Breast epithelium (tissue), 4 donors: ENCODE measurements at regions of chr16 and their contacts with region 1.

Region 1: GRCh38 chr16:76210157-76210556 is 67.0 kb upstream of the CNTNAP4 start:
- DNase-seq: no peak
- H3K4me3 ChIP-seq: no peak overlapping the region
- H3K27ac ChIP-seq: no peak overlapping the region
- H3K4me1 ChIP-seq: no peaks in the 10 kb centered on the region
- H3K27me3 ChIP-seq: no peaks in the 10 kb centered on the region
- CTCF ChIP-seq: no peak
- POLR2A ChIP-seq: no peak

Region 2: DNA sequence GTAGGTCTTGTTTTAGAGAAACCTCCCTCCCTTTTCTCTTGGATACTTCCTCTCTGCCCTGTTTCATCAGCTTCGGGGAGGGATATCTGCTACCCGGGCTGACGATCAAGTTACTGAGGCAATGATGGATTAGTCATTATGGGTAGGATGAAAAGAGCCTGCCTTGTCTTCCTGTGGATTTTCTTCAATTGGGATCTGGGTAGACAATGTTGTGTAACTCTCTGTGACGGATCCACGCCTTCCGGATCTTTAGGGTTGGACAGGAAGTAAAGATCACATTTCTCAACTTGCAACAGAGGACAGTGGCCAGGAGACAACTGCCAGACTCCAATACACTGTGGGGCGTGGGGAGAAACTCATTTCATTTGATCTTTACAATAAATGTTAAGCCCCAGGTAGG is 703.6 kb before region 1 on chr16:
- intact Hi-C with region 1: loop called (anchors 10 kb)
- DNase-seq: peak in 1 of 2 donors; percentile 29
- H3K4me3 ChIP-seq: no peak overlapping the region
- H3K27ac ChIP-seq: peak overlapping the region in 1 of 2 donors; percentile 21
- H3K4me1 ChIP-seq: no peaks in the 10 kb centered on the region
- H3K27me3 ChIP-seq: no peaks in the 10 kb centered on the region
- CTCF ChIP-seq: no peak
- POLR2A ChIP-seq: no peak